Colonic mucosa (tissue), 4 donors: ENCODE measurements at regions of chr7 and their contacts with region 1.

Region 1: GRCh38 chr7:135281363-135281949 is 47.8 kb downstream of the STRA8 start:
- DNase-seq: peak; percentile 86
- H3K4me3 ChIP-seq: no peak overlapping the region
- H3K27ac ChIP-seq: no peak overlapping the region
- H3K4me1 ChIP-seq: no peaks in the 10 kb centered on the region
- H3K27me3 ChIP-seq: peaks cover 4% of the 10 kb centered on the region
- CTCF ChIP-seq: peak; percentile 86

Region 2: DNA sequence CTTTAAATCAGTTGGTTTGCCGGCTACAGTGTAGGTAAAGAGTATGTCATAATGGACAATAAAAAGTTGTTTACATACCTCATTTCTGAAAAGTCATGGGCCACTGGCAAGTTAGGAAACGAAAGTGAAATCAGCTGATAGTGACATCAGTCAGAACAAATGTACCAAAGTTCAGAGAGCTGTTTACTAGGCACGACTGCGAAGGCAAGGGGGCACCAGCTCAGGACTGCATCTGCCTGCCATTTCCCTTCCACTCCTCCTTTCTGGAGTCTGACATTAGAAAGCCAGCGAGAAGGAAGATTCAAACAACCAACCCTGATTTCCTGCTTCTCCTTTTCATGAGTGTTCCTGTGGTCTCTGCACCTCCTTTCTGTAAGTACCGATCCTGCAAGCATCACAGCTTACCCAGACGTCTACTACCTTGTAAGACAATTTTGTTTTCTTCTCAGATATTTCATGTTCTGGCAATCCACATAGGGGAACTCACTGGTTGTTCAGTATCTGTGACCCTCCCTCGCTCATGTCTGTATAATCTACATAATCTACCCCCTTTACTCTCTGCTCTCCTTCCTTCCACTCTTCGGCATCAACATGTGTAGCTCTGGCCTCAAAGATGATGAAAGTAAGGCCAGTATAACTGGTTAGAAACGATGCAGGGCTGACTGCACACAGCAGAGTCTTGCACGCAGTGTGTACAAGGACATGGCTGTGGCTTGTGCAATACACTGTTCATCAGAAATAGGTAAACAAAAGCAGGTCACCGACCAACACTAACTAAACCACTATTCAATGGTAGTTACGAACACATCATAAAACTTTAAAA is 133.3 kb before region 1 on chr7 and contains the start of gene TMEM140:
- intact Hi-C with region 1: no loop called
- DNase-seq: peak; percentile 70
- H3K4me3 ChIP-seq: peak within 1 kb of the TSS; percentile 49
- H3K27ac ChIP-seq: peak within 1 kb of the TSS; percentile 92
- H3K4me1 ChIP-seq: no peaks in the 10 kb centered on the region
- H3K27me3 ChIP-seq: no peaks in the 10 kb centered on the region
- CTCF ChIP-seq: no peak
- total RNA-seq, gene TMEM140: 3.8 to 11.9 TPM

Region 3: DNA sequence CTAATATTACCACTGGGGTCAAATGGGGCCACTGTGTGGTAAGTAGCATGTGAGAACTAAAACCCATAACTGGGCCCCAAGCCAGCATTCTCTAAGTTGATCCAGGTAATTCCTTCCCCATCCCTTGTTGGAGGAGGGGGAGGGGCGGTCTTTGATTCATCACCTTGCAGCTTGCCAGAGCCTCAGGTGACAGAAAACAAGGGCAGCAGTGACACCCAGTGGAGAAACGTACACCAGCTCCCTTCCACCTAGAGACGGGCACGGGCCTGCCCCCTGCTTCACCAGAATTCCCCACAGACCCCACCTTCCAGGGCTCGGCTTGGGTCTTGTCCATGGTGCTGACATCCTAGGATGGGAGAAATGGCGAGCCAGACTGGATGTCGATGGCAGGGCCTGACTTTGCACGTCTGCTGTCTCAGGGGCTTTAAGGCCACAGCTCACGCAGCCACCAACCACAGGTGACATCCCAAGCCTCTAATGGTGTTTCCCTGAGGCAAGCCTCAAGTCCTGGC is 54.2 kb after region 1 on chr7:
- intact Hi-C with region 1: loop called (anchors 1 kb)
- DNase-seq: peak; percentile 76
- H3K4me3 ChIP-seq: no peak overlapping the region
- H3K27ac ChIP-seq: no peak overlapping the region
- H3K4me1 ChIP-seq: no peaks in the 10 kb centered on the region
- H3K27me3 ChIP-seq: no peaks in the 10 kb centered on the region
- CTCF ChIP-seq: peak; percentile 30

Region 4: GRCh38 chr7:135645296-135645904 is 363.9 kb after region 1 on chr7:
- intact Hi-C with region 1: loop called (anchors 5 kb)
- DNase-seq: no peak
- H3K4me3 ChIP-seq: no peak overlapping the region
- H3K27ac ChIP-seq: no peak overlapping the region
- H3K4me1 ChIP-seq: no peaks in the 10 kb centered on the region
- H3K27me3 ChIP-seq: no peaks in the 10 kb centered on the region
- CTCF ChIP-seq: peak; percentile 68